Activated CD4-positive, alpha-beta memory T cell treated with anti-CD3 and anti-CD28 coated beads, Interleukin-2, amount 10 ng/mL, durations not matched to agents 7 days and 5 days (primary cell): ENCODE measurements at regions of chr11 and their contacts with region 1.

Region 1: GRCh38 chr11:45993531-45994001 is 71.1 kb downstream of the LARGE2 start:
- DNase-seq: no peak
- H3K4me3 Mint-ChIP-seq: no peak overlapping the region
- H3K27ac Mint-ChIP-seq: no peak overlapping the region
- H3K4me1 Mint-ChIP-seq: no peaks in the 10 kb centered on the region
- H3K27me3 Mint-ChIP-seq: no peaks in the 10 kb centered on the region

Region 2: GRCh38 chr11:45982656-45983470 is 10.7 kb before region 1 on chr11:
- CTCF ChIA-PET with region 1: interaction called, 14 read pairs
- POLR2A ChIA-PET with region 1: interaction called, 3 read pairs
- DNase-seq: no peak
- H3K4me3 Mint-ChIP-seq: no peak overlapping the region
- H3K27ac Mint-ChIP-seq: no peak overlapping the region
- H3K4me1 Mint-ChIP-seq: peaks cover 13% of the 10 kb centered on the region
- H3K27me3 Mint-ChIP-seq: no peaks in the 10 kb centered on the region